Heart right ventricle (tissue), 16 donors: ENCODE measurements at regions of chr3 and their contacts with region 1.

Region 1: DNA sequence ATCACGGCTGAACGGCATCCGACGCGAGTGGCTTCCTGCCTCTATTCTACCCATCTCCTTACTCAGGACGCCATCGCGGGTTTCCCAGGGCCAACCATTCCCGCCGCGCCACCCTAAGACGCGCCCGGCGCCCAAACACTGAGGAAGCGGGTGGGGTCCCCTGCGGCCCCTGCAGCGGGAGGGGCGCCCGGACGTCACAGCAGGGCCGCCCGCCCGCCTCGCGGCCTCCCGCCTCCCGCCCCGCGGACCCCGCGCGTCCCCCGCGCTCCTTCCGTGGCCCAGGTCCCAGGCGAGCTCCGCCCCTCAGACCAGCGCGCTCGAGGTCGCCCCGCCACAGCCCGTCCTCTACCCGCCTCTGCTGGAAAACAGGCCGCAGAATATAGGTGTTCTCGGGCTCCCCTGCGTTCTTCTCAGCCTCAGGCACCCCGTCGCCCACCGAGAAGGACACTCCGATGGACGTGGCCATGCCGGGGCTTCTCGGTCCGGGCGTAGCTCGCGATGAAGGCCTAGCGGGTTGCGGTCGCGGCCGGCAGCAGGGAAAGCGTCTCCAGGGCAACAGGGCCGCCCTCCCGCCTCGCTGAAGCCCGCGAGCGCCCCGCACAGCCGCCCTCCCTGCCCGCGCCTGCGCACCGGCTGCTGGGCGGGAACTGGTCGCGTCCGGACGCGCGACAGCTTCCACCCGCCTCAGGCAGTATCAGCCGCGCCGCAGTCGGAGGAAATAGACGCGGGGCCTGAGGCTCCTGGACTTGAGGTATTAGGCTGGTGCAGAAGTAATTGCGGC is at the start of gene DYNLT2B:
- DNase-seq: peak; percentile 86 to 90
- ATAC-seq: peak; percentile 98 to 99 (median 99)
- H3K4me3 ChIP-seq: peak within 1 kb of the TSS; percentile 67 to 97 (median 88)
- H3K27ac ChIP-seq: peak within 1 kb of the TSS; percentile 76 to 97 (median 93)
- H3K4me1 ChIP-seq: peaks cover 0 to 16% (median 0%) of the 10 kb centered on the region in 9 donors
- H3K27me3 ChIP-seq: no peaks in the 10 kb centered on the region
- CTCF ChIP-seq: peak in 4 of 9 donors; percentile 13 to 31 (median 22)
- total RNA-seq, gene DYNLT2B: 2.1 to 6.3 (median 3.9) TPM

Region 2: DNA sequence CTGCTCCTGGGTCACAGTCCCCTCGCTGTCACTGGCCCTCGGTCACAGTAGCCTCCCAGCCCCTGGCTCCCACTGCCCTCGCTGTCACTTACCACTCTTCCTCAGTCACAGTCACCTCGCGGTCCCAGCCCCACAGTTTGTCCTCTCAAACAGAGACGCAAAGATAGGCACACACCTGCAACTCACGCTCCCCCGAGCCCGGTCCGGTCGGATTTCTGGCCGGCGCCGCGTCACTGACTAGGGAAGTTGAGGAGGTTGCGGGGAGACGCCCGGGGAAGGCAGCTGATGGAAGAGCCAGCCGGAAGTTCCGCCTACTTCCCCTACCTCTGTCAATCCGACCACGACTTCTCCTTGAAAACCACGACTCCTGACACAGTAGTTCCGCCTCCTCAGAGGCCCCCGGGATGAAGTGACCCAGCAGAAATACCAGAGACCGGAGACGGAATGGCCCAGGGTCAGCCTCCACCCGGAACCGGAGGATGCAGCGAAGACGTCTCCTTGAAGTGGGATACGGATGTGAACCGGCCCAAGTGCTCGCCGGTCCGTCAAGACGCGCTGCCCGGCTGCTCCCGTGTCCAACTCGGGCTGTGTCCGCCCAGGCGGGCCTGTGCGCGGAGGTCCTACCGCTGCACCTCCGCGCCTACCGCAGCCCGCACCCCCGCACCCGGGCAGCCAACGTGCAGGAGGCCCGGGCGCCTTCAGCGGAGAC is 30.3 kb before region 1 on chr3 and contains the start of gene PCYT1A:
- intact Hi-C with region 1: loop called in 1 of 10 experiments (anchors 2 kb)
- DNase-seq: peak; percentile 87 to 94
- ATAC-seq: peak; percentile 96 to 99 (median 98)
- H3K4me3 ChIP-seq: peak within 1 kb of the TSS; percentile 64 to 96 (median 84)
- H3K27ac ChIP-seq: peak within 1 kb of the TSS; percentile 85 to 99 (median 96)
- H3K4me1 ChIP-seq: peaks cover 2 to 51% (median 48%) of the 10 kb centered on the region in 9 donors
- H3K27me3 ChIP-seq: no peaks in the 10 kb centered on the region
- CTCF ChIP-seq: no peak
- total RNA-seq, gene PCYT1A: 93.8 to 121 (median 106) TPM

Region 3: GRCh38 chr3:196432137-196432879 is 114.4 kb after region 1 on chr3 and contains the start of gene UBXN7:
- intact Hi-C with region 1: loop called in 1 of 10 experiments (anchors 10 kb)
- DNase-seq: peak; percentile 95 to 98
- ATAC-seq: peak; percentile 97 to 99 (median 98)
- H3K4me3 ChIP-seq: peak within 1 kb of the TSS; percentile 71 to 100 (median 96)
- H3K27ac ChIP-seq: peak within 1 kb of the TSS; percentile 80 to 99 (median 94)
- H3K4me1 ChIP-seq: peaks cover 0 to 44% (median 24%) of the 10 kb centered on the region in 9 donors
- H3K27me3 ChIP-seq: no peaks in the 10 kb centered on the region
- CTCF ChIP-seq: no peak
- total RNA-seq, gene UBXN7: 25.2 to 41.7 (median 32.5) TPM